ENCODE measurements at regions of chr10 and their contacts with region 1.

Region 1: DNA sequence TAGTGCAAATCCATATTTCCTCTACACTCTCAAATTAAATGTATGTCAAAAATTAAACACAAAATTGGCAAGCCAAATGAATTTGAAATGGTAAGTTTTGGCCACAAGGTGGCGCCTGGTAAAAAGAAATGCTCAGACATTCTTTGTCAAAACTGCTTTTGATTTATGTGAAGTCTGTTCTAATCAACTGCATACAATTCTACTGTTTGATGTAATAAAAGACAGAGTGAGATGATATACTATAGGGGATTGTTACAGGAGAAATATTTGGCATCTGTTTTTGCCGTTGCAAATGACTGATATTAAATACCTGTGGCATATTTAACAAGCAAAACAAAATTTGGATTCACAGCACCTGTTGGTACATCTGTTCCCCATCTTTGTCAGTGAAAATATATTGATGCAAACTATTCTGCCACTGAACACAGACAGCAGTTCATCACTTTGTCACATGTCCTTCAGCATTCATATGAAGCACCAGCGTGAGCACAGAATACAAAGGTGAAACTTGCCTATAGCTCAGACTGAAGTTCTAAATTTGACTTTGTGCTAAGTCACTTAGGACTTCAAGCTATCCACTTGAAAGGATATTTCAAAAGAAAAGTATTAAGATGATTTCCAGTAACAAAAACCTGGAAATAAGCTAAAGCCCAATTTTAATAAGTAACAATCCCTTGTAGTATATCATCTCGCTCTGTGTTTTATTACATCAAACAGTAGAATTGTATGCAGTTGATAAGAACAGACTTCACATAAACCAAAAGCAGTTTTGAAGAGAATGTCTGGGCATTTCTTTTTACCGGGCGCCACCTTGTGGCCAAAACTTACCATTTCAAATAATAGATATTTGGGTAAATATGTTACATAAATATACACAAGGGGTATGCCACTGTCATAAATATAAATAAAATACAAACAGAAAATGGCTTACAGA is 10.2 kb upstream of the CH25H start:
- DNase-seq: peak; percentile 76
- ATAC-seq: peak; percentile 55
- H3K4me3 Mint-ChIP-seq: no peak overlapping the region
- H3K27ac Mint-ChIP-seq: no peak overlapping the region
- H3K4me1 Mint-ChIP-seq: peaks cover 9% of the 10 kb centered on the region
- H3K27me3 Mint-ChIP-seq: no peaks in the 10 kb centered on the region

Region 2: GRCh38 chr10:89207181-89207800 is 10.0 kb before region 1 on chr10 and contains the start of gene CH25H:
- CTCF ChIA-PET with region 1: interaction called, 32 read pairs
- POLR2A ChIA-PET with region 1: no interaction called
- intact Hi-C with region 1: no loop called
- DNase-seq: peak; percentile 76
- ATAC-seq: peak; percentile 76
- H3K4me3 Mint-ChIP-seq: peak within 1 kb of the TSS; percentile 69
- H3K27ac Mint-ChIP-seq: no peak within 1 kb of the TSS
- H3K4me1 Mint-ChIP-seq: peaks cover 10% of the 10 kb centered on the region
- H3K27me3 Mint-ChIP-seq: peaks cover 35% of the 10 kb centered on the region
- total RNA-seq, gene CH25H: not detected

Region 3: DNA sequence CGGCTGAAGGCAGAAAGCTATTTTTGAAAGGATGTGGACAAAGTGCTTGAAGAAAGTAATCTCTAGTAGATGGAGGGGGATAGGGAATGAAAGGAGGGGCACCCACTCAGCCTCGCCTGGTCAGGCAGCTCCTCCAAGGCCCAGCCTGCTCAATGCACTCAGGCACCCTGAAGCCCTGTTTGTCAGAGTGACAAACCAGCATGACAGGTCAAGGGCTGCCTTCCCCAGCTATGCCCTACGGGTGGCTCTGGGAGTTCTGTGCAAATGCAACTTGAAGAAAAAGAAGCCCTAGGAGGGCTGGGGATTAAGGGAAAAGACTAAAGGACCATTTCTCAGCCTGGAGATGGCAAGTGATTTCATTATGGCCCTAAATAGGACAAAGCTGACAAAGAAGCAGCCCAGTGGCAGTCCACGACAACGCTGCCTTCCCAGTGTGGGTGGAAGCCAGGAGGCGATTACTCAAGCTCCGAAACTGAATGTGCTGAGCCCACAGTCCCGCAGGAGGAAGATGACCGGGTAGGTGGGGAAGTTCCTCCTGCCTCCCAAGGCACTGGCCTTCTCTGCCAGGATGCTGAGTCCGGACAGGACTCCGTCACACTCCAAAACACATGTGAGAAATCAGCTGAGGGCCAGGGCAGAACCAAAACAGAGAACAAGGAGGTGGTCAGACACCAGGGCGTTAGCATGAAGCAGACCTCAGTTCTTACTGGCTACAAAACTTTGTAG is 17.9 kb after region 1 on chr10:
- CTCF ChIA-PET with region 1: interaction called, 39 read pairs
- POLR2A ChIA-PET with region 1: no interaction called
- intact Hi-C with region 1: no loop called
- DNase-seq: no peak
- ATAC-seq: no peak
- H3K4me3 Mint-ChIP-seq: no peak overlapping the region
- H3K27ac Mint-ChIP-seq: no peak overlapping the region
- H3K4me1 Mint-ChIP-seq: no peaks in the 10 kb centered on the region
- H3K27me3 Mint-ChIP-seq: no peaks in the 10 kb centered on the region

Region 4: DNA sequence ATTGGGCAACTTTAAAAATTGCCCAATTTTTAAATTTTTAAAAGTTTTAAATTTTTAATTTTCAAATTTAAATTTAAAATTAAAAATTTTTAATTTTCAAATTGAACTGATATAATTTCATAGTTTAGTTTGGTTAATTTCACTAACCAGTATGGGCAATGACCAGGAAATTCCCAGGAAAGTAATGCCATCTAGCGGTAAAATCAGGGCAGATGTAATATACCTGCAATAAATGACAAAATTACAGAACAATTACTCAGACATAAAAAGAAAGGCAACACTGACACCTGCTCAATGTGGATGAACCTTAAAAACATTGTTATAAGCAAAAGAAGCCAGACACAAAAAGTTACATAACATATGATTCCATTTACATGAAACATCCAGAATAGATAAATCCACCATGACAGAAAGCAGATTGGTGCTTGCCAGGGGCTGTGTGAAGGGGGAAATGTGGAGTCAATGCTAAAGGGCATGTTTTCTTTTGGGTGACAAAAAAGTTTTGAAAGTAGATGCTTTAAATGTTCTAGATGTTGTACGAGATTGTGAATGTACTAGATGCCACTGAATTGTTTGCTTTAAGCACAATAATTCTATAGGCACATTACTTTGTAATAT is 346.6 kb after region 1 on chr10:
- CTCF ChIA-PET with region 1: interaction called, 7 read pairs
- POLR2A ChIA-PET with region 1: no interaction called
- intact Hi-C with region 1: loop called (anchors 1 kb)
- DNase-seq: no peak
- ATAC-seq: peak; percentile 73
- H3K4me3 Mint-ChIP-seq: no peak overlapping the region
- H3K27ac Mint-ChIP-seq: no peak overlapping the region
- H3K4me1 Mint-ChIP-seq: no peaks in the 10 kb centered on the region
- H3K27me3 Mint-ChIP-seq: peaks cover 6% of the 10 kb centered on the region

Measured in activated CD4-positive, alpha-beta T cell treated with anti-CD3 and anti-CD28 coated beads for 36 hours (primary cell).